Esophagus muscularis mucosa (tissue), 4 donors: ENCODE measurements at regions of chr2 and their contacts with region 1.

Region 1: GRCh38 chr2:30472326-30472725 is 25.3 kb downstream of the LCLAT1 start:
- DNase-seq: no peak
- H3K4me3 ChIP-seq: no peak overlapping the region
- H3K27ac ChIP-seq: no peak overlapping the region
- H3K4me1 ChIP-seq: peaks cover 12 to 39% (median 32%) of the 10 kb centered on the region in 4 donors
- H3K27me3 ChIP-seq: no peaks in the 10 kb centered on the region
- CTCF ChIP-seq: no peak
- EP300 ChIP-seq: no peak
- POLR2A ChIP-seq: no peak

Region 2: GRCh38 chr2:29700560-29700959 is 771.8 kb before region 1 on chr2:
- intact Hi-C with region 1: no loop called
- DNase-seq: no peak
- H3K4me3 ChIP-seq: no peak overlapping the region
- H3K27ac ChIP-seq: no peak overlapping the region
- H3K4me1 ChIP-seq: no peaks in the 10 kb centered on the region
- H3K27me3 ChIP-seq: no peaks in the 10 kb centered on the region
- CTCF ChIP-seq: no peak
- EP300 ChIP-seq: no peak
- POLR2A ChIP-seq: no peak

Region 3: DNA sequence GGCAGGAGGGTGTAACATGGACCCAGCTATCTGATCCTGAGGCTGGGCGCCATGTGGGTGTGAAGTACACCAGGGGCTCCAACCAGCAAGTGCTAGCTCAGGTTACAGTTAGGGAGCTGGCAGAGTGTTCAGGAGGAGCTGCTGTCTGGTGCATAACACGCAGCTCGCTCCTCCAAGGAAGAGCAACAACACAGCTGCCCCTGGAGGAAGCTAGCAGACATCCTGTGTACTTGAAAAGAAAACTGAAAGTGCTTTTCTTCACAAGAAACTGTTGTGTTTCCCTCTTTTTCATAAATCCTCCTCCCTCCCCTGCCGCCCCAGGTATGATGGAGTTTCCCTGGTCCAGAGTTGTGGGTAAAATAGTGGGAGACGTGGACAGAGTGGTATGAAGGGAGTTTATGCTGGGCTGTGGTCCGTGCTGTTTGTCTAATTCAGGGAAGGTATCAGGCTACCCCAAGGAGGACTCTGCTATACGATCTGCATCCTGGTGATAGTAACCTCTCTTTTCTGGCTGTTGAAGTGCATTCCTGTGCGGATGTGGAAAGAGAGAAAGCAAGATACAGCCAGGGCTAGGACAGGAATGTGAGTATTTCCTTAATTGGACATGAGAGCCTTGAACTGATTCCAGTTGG is 247.1 kb before region 1 on chr2:
- intact Hi-C with region 1: loop called (anchors 10 kb)
- DNase-seq: no peak
- H3K4me3 ChIP-seq: peak overlapping the region; percentile 39 to 52 (median 44)
- H3K27ac ChIP-seq: peak overlapping the region; percentile 80 to 87 (median 84)
- H3K4me1 ChIP-seq: peaks cover 28 to 40% (median 29%) of the 10 kb centered on the region in 4 donors
- H3K27me3 ChIP-seq: no peaks in the 10 kb centered on the region
- CTCF ChIP-seq: peak in 1 of 3 experiments; percentile 11
- EP300 ChIP-seq: no peak
- POLR2A ChIP-seq: no peak

Region 4: GRCh38 chr2:30410217-30410616 is 62.1 kb before region 1 on chr2:
- intact Hi-C with region 1: no loop called
- DNase-seq: no peak
- H3K4me3 ChIP-seq: no peak overlapping the region
- H3K27ac ChIP-seq: peak overlapping the region; percentile 69 to 87 (median 78)
- H3K4me1 ChIP-seq: peaks cover 62 to 93% (median 74%) of the 10 kb centered on the region in 4 donors
- H3K27me3 ChIP-seq: no peaks in the 10 kb centered on the region
- CTCF ChIP-seq: no peak
- EP300 ChIP-seq: no peak
- POLR2A ChIP-seq: no peak

Region 5: DNA sequence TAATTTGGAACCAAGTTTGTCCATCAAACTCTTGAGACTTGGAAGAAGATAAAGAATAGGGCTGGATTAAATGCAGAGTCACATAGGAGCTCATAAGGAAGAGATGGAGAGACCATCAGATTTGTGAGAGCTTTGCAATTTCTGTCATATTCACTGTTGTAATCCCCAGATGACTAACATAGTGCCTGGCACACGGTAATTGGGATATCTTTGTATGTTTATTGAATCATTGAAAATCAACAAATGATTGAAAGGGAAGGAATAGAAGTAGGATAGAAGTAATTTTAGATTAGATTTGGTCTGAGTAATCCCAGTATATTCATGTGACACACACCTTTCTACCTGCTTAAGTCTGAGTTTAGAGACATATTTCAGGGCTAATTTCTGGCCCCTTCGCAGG is 50.1 kb after region 1 on chr2:
- intact Hi-C with region 1: no loop called
- DNase-seq: no peak
- H3K4me3 ChIP-seq: no peak overlapping the region
- H3K27ac ChIP-seq: no peak overlapping the region
- H3K4me1 ChIP-seq: peaks cover 0 to 5% (median 4%) of the 10 kb centered on the region in 4 donors
- H3K27me3 ChIP-seq: no peaks in the 10 kb centered on the region
- CTCF ChIP-seq: no peak
- EP300 ChIP-seq: no peak
- POLR2A ChIP-seq: no peak